CD4-positive, alpha-beta memory T cell (primary cell): ENCODE measurements at regions of chr10 and their contacts with region 1.

Region 1: GRCh38 chr10:89414146-89414878 is at the start of gene IFIT5:
- DNase-seq: peak; percentile 78 to 83 (median 81)
- H3K4me3 ChIP-seq: peak within 1 kb of the TSS; percentile 94
- H3K4me3 Mint-ChIP-seq: peak within 1 kb of the TSS; percentile 93 to 96 (median 94)
- H3K27ac ChIP-seq: peak within 1 kb of the TSS; percentile 91
- H3K27ac Mint-ChIP-seq: peak within 1 kb of the TSS; percentile 98 to 99 (median 98)
- H3K4me1 ChIP-seq: peaks cover 58% of the 10 kb centered on the region
- H3K4me1 Mint-ChIP-seq: peaks cover 43 to 81% (median 55%) of the 10 kb centered on the region in 4 donors
- H3K27me3 ChIP-seq: no peaks in the 10 kb centered on the region
- H3K27me3 Mint-ChIP-seq: no peaks in the 10 kb centered on the region
- total RNA-seq, gene IFIT5: 24.6 to 25.6 TPM

Region 2: GRCh38 chr10:87817609-87818504 is 1596.5 kb before region 1 on chr10 and contains the start of gene ATAD1:
- CTCF ChIA-PET with region 1: no interaction called
- POLR2A ChIA-PET with region 1: no interaction called
- intact Hi-C with region 1: loop called (anchors 10 kb)
- DNase-seq: peak; percentile 89 to 91 (median 91)
- H3K4me3 ChIP-seq: peak within 1 kb of the TSS; percentile 85 to 95
- H3K4me3 Mint-ChIP-seq: peak within 1 kb of the TSS; percentile 88 to 98 (median 94)
- H3K27ac ChIP-seq: peak within 1 kb of the TSS; percentile 94
- H3K27ac Mint-ChIP-seq: peak within 1 kb of the TSS; percentile 94 to 99 (median 98)
- H3K4me1 ChIP-seq: peaks cover 46% of the 10 kb centered on the region
- H3K4me1 Mint-ChIP-seq: peaks cover 27 to 43% (median 35%) of the 10 kb centered on the region in 4 donors
- H3K27me3 ChIP-seq: no peaks in the 10 kb centered on the region
- H3K27me3 Mint-ChIP-seq: no peaks in the 10 kb centered on the region
- total RNA-seq, gene ATAD1: 46.5 to 52.0 TPM

Region 3: DNA sequence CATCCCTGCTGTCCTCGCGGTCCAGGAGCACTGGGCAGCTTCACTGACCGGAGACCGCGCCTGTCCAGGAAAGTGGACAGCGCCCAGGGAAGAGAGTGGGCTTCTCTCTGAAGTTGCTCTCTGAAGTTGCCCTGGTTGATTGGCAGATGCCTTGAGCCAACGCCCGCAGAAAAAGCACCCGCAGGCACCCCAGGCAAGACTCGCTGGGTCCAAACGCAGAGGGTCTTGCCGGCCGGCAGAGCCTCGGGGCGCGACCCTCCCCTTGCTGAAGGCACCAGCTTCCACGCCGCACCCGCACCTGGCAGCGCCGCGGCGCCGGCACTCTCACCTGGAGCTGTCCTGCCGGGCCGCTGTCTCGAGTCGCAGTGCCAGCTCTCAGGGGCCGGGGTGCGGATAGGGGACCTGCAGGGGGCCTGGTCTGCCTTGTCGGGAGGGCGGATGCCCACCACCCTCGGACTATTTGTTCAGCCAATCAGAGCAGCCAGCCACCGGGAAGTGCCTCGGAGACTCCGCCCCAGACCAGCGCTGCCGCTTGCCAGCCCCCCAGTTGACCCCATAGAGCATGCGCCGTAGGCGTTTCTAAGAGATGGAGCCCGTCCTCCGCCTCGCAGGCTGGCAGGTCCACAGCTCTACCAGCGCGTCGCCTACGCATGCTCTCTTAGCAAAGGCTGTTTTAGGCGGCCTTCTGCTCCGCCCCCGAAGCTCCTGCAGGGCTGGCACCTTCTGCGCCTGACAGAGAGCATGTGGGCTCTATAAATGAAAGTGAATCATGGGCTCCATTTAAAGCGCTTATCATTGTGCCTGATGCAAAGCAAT is 162.7 kb before region 1 on chr10 and contains the start of gene LIPA:
- CTCF ChIA-PET with region 1: interaction called, 8 read pairs
- POLR2A ChIA-PET with region 1: interaction called, 27 read pairs
- intact Hi-C with region 1: loop called (anchors 1 kb)
- DNase-seq: peak; percentile 92 to 98 (median 95)
- H3K4me3 ChIP-seq: peak within 1 kb of the TSS; percentile 58 to 87
- H3K4me3 Mint-ChIP-seq: peak within 1 kb of the TSS; percentile 84 to 96 (median 90)
- H3K27ac ChIP-seq: peak within 1 kb of the TSS; percentile 56
- H3K27ac Mint-ChIP-seq: peak within 1 kb of the TSS; percentile 60 to 88 (median 81)
- H3K4me1 ChIP-seq: peaks cover 21% of the 10 kb centered on the region
- H3K4me1 Mint-ChIP-seq: peaks cover 17 to 29% (median 21%) of the 10 kb centered on the region in 4 donors
- H3K27me3 ChIP-seq: no peaks in the 10 kb centered on the region
- H3K27me3 Mint-ChIP-seq: peaks cover 3 to 5% of the 10 kb centered on the region in 2 donors
- total RNA-seq, gene LIPA: 55.5 to 60.2 TPM

Region 4: DNA sequence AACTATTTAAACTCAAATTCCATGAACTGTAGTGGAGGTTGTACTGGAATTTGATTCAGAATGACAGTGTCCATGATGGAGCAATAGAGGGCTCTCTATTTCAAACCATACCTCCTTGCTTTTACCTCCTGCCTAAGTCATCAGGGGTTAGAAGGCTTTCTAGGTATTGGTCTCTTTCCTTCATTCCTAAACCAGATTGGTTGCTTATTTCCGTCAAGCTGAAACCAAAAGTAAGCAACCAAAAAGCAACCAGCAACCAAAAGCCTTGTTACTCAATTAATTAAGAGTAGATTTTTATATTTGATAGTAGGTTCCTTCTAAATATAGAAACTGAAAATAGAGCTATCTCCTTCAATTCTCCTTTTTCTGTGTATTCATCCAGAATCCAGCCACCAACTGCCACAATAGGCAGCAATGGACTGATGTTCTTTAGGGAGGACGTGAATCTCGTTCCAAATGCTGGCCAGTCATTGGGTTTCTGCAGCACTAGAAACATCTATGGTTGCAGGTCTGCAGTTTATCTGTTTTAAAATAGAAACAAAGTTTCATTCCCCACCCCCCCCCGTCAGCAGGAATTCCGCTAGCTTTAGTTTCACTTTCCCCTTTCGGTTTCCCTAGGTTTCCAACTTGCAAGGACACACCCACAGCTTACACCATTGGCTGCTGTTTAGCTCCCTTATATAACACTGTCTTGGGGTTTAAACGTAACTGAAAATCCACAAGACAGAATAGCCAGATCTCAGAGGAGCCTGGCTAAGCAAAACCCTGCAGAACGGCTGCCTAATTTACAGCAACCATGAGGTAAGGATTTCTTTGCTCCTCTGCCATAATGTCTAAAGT is 22.2 kb before region 1 on chr10 and contains the start of gene IFIT1:
- CTCF ChIA-PET with region 1: interaction called, 27 read pairs
- POLR2A ChIA-PET with region 1: interaction called, 59 read pairs
- intact Hi-C with region 1: loop called (anchors 1 kb)
- DNase-seq: peak; percentile 57 to 81 (median 79)
- H3K4me3 ChIP-seq: peak within 1 kb of the TSS; percentile 69 to 82
- H3K4me3 Mint-ChIP-seq: peak within 1 kb of the TSS; percentile 85 to 97 (median 94)
- H3K27ac ChIP-seq: peak within 1 kb of the TSS; percentile 68
- H3K27ac Mint-ChIP-seq: peak within 1 kb of the TSS; percentile 76 to 98 (median 95)
- H3K4me1 ChIP-seq: peaks cover 31% of the 10 kb centered on the region
- H3K4me1 Mint-ChIP-seq: peaks cover 13 to 35% (median 31%) of the 10 kb centered on the region in 4 donors
- H3K27me3 ChIP-seq: no peaks in the 10 kb centered on the region
- H3K27me3 Mint-ChIP-seq: no peaks in the 10 kb centered on the region
- total RNA-seq, gene IFIT1: 5.1 to 6.3 TPM

Region 5: DNA sequence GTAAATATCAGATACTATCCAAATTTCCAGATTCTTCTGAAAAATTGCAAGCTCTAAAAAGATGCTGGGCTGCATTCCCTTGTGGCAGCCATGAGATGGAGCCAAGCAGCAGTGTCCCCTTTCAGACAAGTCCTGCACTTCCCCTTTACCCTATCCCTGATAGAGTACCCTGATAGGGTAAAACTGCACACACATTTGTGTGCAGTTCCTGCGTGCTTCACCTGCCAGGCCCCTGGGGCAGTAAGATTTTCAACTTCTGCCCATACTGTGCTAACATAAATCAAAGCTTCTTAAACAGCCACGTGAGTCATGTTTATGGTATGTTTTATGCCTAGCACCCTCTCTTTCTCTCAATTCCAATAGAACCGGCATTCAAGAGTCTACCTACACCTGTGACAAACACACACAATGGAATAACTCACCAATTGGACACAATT is 52.3 kb after region 1 on chr10:
- CTCF ChIA-PET with region 1: no interaction called
- POLR2A ChIA-PET with region 1: no interaction called
- intact Hi-C with region 1: no loop called
- DNase-seq: no peak
- H3K4me3 ChIP-seq: no peak overlapping the region
- H3K4me3 Mint-ChIP-seq: no peak overlapping the region
- H3K27ac ChIP-seq: no peak overlapping the region
- H3K27ac Mint-ChIP-seq: no peak overlapping the region
- H3K4me1 ChIP-seq: no peaks in the 10 kb centered on the region
- H3K4me1 Mint-ChIP-seq: peaks cover 0 to 5% (median 3%) of the 10 kb centered on the region in 4 donors
- H3K27me3 ChIP-seq: no peaks in the 10 kb centered on the region
- H3K27me3 Mint-ChIP-seq: peaks cover 0 to 2% of the 10 kb centered on the region in 2 donors

Region 6: DNA sequence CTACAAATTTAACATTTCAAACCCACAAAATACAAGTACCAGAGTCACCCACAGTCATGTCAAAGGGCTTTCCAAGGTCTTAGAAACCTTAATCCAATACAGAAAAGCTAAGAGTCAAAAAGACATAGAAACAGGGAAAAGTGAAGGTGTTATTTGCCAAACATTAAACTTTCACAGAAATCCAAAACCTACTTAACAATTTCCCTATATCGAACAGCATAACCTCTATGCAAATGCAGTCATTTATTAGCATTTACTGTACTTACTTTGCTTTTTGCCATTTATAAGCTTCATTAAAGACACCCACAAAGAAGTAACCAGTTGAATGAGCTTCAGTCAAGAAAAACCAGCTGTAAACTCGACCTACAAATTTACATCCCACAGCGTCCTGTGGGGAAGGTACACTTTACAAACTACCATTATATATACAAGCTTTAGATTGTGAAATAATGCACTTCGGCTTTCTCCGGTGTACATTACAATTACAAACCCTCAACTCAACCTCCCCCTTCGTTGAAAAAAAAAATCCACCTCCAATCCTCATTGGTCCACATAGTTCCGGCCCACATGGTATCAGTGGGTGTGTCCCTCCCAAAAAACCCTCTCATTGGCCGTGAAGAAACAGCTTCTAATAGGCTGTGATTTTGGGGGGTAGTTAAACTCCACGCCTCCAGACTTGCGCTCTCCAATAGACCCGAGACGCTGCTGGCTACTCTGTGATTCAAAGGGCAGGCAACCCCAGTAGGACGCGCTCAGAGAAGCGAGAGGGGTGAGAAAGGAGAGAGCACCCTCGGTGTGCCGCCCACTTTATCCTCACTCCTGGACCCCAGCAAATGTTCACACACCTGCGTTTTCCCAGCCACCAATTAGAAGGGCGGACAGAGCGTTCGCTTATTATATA is 229.4 kb after region 1 on chr10:
- CTCF ChIA-PET with region 1: no interaction called
- POLR2A ChIA-PET with region 1: interaction called, 5 read pairs
- intact Hi-C with region 1: loop called (anchors 2 kb)
- DNase-seq: peak; percentile 74 to 82 (median 75)
- H3K4me3 ChIP-seq: peak overlapping the region; percentile 55 to 75
- H3K4me3 Mint-ChIP-seq: no peak overlapping the region
- H3K27ac ChIP-seq: peak overlapping the region; percentile 43
- H3K27ac Mint-ChIP-seq: no peak overlapping the region
- H3K4me1 ChIP-seq: peaks cover 16% of the 10 kb centered on the region
- H3K4me1 Mint-ChIP-seq: peaks cover 8 to 11% (median 10%) of the 10 kb centered on the region in 4 donors
- H3K27me3 ChIP-seq: no peaks in the 10 kb centered on the region
- H3K27me3 Mint-ChIP-seq: peaks cover 3 to 4% of the 10 kb centered on the region in 2 donors

Region 7: DNA sequence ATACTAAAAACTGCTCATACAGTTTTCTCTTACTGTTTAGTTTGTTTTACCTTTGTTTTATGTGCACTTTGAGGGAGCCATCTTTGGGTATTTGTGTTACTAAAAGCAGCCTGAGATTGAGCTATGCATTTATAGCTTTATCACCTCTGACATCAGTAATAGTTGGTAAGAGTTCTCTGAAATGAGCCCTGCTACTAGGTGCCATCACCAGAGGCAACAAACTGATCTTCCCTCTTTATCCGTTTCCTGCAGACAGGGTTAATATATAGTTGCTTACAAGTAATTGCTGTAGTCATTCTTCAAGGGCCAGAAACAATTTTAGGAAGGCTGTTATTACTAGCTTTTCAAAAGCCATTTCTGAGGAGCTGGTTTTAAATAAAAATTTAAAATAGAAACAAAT is 336.1 kb after region 1 on chr10:
- CTCF ChIA-PET with region 1: no interaction called
- POLR2A ChIA-PET with region 1: no interaction called
- intact Hi-C with region 1: no loop called
- DNase-seq: no peak
- H3K4me3 ChIP-seq: no peak overlapping the region
- H3K4me3 Mint-ChIP-seq: no peak overlapping the region
- H3K27ac ChIP-seq: no peak overlapping the region
- H3K27ac Mint-ChIP-seq: peak overlapping the region in 1 of 7 donors; percentile 7
- H3K4me1 ChIP-seq: no peaks in the 10 kb centered on the region
- H3K4me1 Mint-ChIP-seq: peaks cover 0 to 2% (median 0%) of the 10 kb centered on the region in 4 donors
- H3K27me3 ChIP-seq: no peaks in the 10 kb centered on the region
- H3K27me3 Mint-ChIP-seq: no peaks in the 10 kb centered on the region